ENCODE measurements at regions of chr17 and their contacts with region 1.

Region 1: GRCh38 chr17:19019036-19019941 is 14.7 kb upstream of the FAM83G start:
- DNase-seq: no peak
- ATAC-seq: no peak
- H3K4me3 ChIP-seq: no peak overlapping the region
- H3K27ac ChIP-seq: no peak overlapping the region
- H3K4me1 ChIP-seq: no peaks in the 10 kb centered on the region
- H3K27me3 ChIP-seq: no peaks in the 10 kb centered on the region
- CTCF ChIP-seq: no peak
- POLR2A ChIP-seq: no peak

Region 2: GRCh38 chr17:18960803-18961511 is 58.3 kb before region 1 on chr17:
- in situ Hi-C with region 1: loop called in 1 of 4 experiments (anchors 10 kb)
- intact Hi-C with region 1: loop called (anchors 5 kb)
- DNase-seq: peak; percentile 58 to 62
- ATAC-seq: peak; percentile 81 to 92
- H3K4me3 ChIP-seq: no peak overlapping the region
- H3K27ac ChIP-seq: no peak overlapping the region
- H3K4me1 ChIP-seq: no peaks in the 10 kb centered on the region
- H3K27me3 ChIP-seq: no peaks in the 10 kb centered on the region
- CTCF ChIP-seq: peak; percentile 73 to 96 (median 92)
- POLR2A ChIP-seq: no peak

Region 3: GRCh38 chr17:18981642-18982424 is 37.5 kb before region 1 on chr17:
- in situ Hi-C with region 1: no loop called
- intact Hi-C with region 1: loop called (anchors 5 kb)
- DNase-seq: no peak
- ATAC-seq: no peak
- H3K4me3 ChIP-seq: no peak overlapping the region
- H3K27ac ChIP-seq: no peak overlapping the region
- H3K4me1 ChIP-seq: no peaks in the 10 kb centered on the region
- H3K27me3 ChIP-seq: no peaks in the 10 kb centered on the region
- CTCF ChIP-seq: no peak
- POLR2A ChIP-seq: no peak